A549 (cell line): ENCODE measurements at regions of chr16 and their contacts with region 1.

Region 1: GRCh38 chr16:23803591-23804123 is 32.1 kb upstream of the PRKCB start:
- DNase-seq: peak; percentile 55 to 60
- ATAC-seq: peak; percentile 91 to 95
- H3K4me3 ChIP-seq: no peak overlapping the region
- H3K27ac ChIP-seq: no peak overlapping the region
- H3K4me1 ChIP-seq: 0 out of 3 replicates have a peak, but pooled peaks cover 5% of the 10 kb centered on the region
- CTCF ChIP-seq: peak; percentile 52
- EP300 ChIP-seq: no peak
- POLR2A ChIP-seq: no peak
- RAD21 ChIP-seq: peak; percentile 55 to 62

Region 2: GRCh38 chr16:23570992-23571632 is 232.5 kb before region 1 on chr16:
- CTCF ChIA-PET with region 1: no interaction called
- POLR2A ChIA-PET with region 1: no interaction called
- DNase-seq: no peak
- ATAC-seq: no peak
- H3K4me3 ChIP-seq: no peak overlapping the region
- H3K27ac ChIP-seq: no peak overlapping the region
- H3K4me1 ChIP-seq: no peaks in the 10 kb centered on the region
- CTCF ChIP-seq: no peak
- EP300 ChIP-seq: no peak
- POLR2A ChIP-seq: no peak
- RAD21 ChIP-seq: no peak

Region 3: GRCh38 chr16:23788685-23789084 is 15.0 kb before region 1 on chr16:
- CTCF ChIA-PET with region 1: interaction called, 12 read pairs
- POLR2A ChIA-PET with region 1: no interaction called
- DNase-seq: no peak
- ATAC-seq: no peak
- H3K4me3 ChIP-seq: no peak overlapping the region
- H3K27ac ChIP-seq: no peak overlapping the region
- H3K4me1 ChIP-seq: no peaks in the 10 kb centered on the region
- CTCF ChIP-seq: no peak
- EP300 ChIP-seq: no peak
- POLR2A ChIP-seq: no peak
- RAD21 ChIP-seq: no peak

Region 4: DNA sequence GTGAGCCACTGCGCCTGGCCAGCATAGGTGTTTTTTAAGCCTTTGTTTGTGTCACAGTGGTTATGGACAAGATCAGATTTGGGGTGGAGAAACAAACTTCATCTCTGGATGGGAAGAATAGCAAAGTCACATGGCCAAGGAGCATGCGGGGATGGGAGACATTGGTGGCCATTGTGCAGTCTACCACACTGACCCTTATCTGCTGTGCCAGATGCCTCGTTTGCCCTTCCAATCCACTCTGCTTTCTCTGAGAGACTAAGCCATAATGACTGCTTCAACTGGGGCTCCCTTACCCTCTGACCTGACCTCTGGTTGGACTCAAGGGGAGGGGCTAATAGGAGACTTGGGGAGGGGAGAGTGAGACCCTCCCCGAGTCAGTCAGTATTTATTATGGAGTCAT is 199.0 kb after region 1 on chr16:
- CTCF ChIA-PET with region 1: interaction called, 10 read pairs
- POLR2A ChIA-PET with region 1: no interaction called
- DNase-seq: no peak
- ATAC-seq: no peak
- H3K4me3 ChIP-seq: no peak overlapping the region
- H3K27ac ChIP-seq: no peak overlapping the region
- H3K4me1 ChIP-seq: no peaks in the 10 kb centered on the region
- CTCF ChIP-seq: no peak
- EP300 ChIP-seq: no peak
- POLR2A ChIP-seq: no peak
- RAD21 ChIP-seq: no peak

Region 5: GRCh38 chr16:24010440-24011089 is 206.9 kb after region 1 on chr16:
- CTCF ChIA-PET with region 1: interaction called, 85 read pairs
- POLR2A ChIA-PET with region 1: no interaction called
- DNase-seq: peak; percentile 48 to 81
- ATAC-seq: peak; percentile 82 to 95
- H3K4me3 ChIP-seq: no peak overlapping the region
- H3K27ac ChIP-seq: no peak overlapping the region
- H3K4me1 ChIP-seq: no peaks in the 10 kb centered on the region
- CTCF ChIP-seq: peak; percentile 68
- EP300 ChIP-seq: no peak
- POLR2A ChIP-seq: no peak
- RAD21 ChIP-seq: peak; percentile 64 to 80; a peak in 4 of 5 replicates

Region 6: DNA sequence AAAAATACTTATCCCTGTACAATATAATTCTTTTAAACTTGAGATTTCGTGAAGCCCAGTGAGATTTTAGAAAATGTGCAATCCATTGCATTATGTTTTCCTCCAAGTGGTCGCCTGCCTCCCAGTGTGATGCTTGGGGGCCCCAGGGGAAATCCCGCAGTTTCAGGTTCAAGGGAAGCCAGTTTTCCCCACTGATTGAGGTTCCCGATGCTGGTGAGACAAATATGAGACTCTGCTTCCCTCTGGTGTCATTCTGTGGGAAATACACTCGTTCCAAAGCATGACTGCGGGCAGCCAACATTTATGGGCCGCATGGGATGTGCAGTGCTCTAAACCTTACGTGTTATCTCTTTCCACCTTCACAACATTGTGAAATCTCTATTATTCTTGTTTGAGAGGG is 233.0 kb after region 1 on chr16:
- CTCF ChIA-PET with region 1: interaction called, 116 read pairs
- POLR2A ChIA-PET with region 1: no interaction called
- DNase-seq: peak; percentile 48 to 84
- ATAC-seq: peak; percentile 78 to 91
- H3K4me3 ChIP-seq: no peak overlapping the region
- H3K27ac ChIP-seq: no peak overlapping the region
- H3K4me1 ChIP-seq: no peaks in the 10 kb centered on the region
- CTCF ChIP-seq: peak; percentile 80
- EP300 ChIP-seq: no peak
- POLR2A ChIP-seq: no peak
- RAD21 ChIP-seq: peak; percentile 89 to 93